Naive thymus-derived CD4-positive, alpha-beta T cell (primary cell): ENCODE measurements at regions of chr1 and their contacts with region 1.

Region 1: DNA sequence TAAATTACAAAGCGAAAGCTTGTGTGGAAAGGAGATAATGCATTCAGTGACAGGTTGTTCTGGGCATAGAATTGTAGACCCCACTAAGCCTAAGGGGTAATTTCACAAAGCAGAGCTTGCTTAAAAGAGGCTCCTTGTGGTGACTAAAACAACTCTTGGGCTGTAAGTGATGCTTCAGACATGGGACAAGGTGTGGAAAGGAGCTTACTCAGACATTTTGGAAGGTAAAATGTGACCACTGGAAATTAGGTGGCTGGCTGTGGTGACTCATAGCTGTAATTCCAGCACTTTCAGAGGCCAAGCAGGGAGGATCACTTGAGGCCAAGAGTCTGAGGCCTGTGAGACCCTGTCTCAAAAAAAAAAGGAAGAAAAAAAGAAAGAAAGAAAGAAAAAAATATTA is 51.1 kb upstream of the LRRC8C start:
- DNase-seq: no peak
- ATAC-seq: no peak
- H3K4me3 ChIP-seq: no peak overlapping the region
- H3K4me3 Mint-ChIP-seq: no peak overlapping the region
- H3K27ac ChIP-seq: no peak overlapping the region
- H3K27ac Mint-ChIP-seq: peak overlapping the region in 4 of 9 donors; percentile 5 to 61 (median 48)
- H3K4me1 ChIP-seq: no peaks in the 10 kb centered on the region
- H3K4me1 Mint-ChIP-seq: peaks cover 6 to 42% (median 27%) of the 10 kb centered on the region in 7 donors
- H3K27me3 ChIP-seq: no peaks in the 10 kb centered on the region
- H3K27me3 Mint-ChIP-seq: no peaks in the 10 kb centered on the region

Region 2: DNA sequence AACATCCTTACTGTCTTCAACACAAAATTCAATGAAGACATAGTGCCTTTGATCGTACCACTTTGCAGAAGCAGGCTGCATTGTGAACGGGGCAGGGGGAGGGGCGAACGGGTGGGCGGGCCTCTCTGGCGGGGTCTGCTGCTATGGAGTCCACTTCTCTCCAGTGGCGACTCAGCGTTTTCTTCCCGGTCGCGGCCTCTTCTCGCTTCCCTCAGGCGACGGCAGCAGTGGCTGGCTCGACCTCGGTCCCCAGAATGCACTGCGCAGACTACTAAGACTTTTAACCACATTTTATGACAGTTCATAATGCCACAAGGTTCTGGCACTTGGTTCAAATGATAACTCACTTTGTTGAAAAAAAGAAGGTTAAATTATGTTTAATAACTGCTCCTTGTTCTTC is 477.2 kb before region 1 on chr1:
- CTCF ChIA-PET with region 1: no interaction called
- POLR2A ChIA-PET with region 1: no interaction called
- intact Hi-C with region 1: no loop called
- DNase-seq: no peak
- ATAC-seq: no peak
- H3K4me3 ChIP-seq: no peak overlapping the region
- H3K4me3 Mint-ChIP-seq: no peak overlapping the region
- H3K27ac ChIP-seq: no peak overlapping the region
- H3K27ac Mint-ChIP-seq: peak overlapping the region in 4 of 9 donors; percentile 17 to 71 (median 36)
- H3K4me1 ChIP-seq: no peaks in the 10 kb centered on the region
- H3K4me1 Mint-ChIP-seq: peaks cover 0 to 14% (median 9%) of the 10 kb centered on the region in 7 donors
- H3K27me3 ChIP-seq: no peaks in the 10 kb centered on the region
- H3K27me3 Mint-ChIP-seq: no peaks in the 10 kb centered on the region

Region 3: GRCh38 chr1:89381618-89382017 is 200.2 kb before region 1 on chr1:
- CTCF ChIA-PET with region 1: no interaction called
- POLR2A ChIA-PET with region 1: no interaction called
- intact Hi-C with region 1: no loop called
- DNase-seq: no peak
- ATAC-seq: no peak
- H3K4me3 ChIP-seq: no peak overlapping the region
- H3K4me3 Mint-ChIP-seq: no peak overlapping the region
- H3K27ac ChIP-seq: no peak overlapping the region
- H3K27ac Mint-ChIP-seq: no peak overlapping the region
- H3K4me1 ChIP-seq: no peaks in the 10 kb centered on the region
- H3K4me1 Mint-ChIP-seq: peaks cover 0 to 14% (median 0%) of the 10 kb centered on the region in 7 donors
- H3K27me3 ChIP-seq: no peaks in the 10 kb centered on the region
- H3K27me3 Mint-ChIP-seq: peaks cover 0 to 2% (median 0%) of the 10 kb centered on the region in 5 donors

Region 4: DNA sequence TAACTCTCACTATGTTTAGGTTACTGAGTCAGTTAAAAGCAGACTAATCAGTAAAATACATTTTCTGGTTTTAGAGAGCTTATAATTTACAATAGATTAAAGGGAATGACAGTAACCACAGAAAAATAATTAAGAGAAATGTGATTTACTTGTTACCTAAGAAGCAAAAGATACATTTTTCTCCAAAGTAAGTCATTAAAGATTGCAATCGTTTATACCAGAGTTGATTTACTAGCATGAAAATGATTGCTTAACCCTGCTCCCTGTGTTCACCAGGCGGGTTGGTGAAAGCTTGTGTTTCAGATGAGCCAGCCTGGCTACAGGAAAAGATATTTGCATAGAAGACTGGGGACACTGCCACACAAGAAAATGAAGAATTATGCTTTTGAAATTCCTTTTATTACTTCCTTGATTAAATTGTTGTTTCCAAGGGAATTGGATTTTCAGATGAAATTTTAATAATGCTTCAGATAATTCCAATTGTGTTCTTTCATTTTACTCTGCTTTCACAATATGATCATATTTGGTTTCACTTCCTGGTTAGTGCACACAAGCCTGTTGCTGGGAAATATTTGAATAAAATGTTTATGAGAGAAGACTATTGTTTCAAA is 29.3 kb before region 1 on chr1:
- CTCF ChIA-PET with region 1: no interaction called
- POLR2A ChIA-PET with region 1: no interaction called
- intact Hi-C with region 1: no loop called
- DNase-seq: peak in 3 of 9 donors; percentile 4 to 13 (median 12)
- ATAC-seq: peak; percentile 54
- H3K4me3 ChIP-seq: peak overlapping the region; percentile 40
- H3K4me3 Mint-ChIP-seq: peak overlapping the region in 9 of 10 donors; percentile 18 to 78 (median 56)
- H3K27ac ChIP-seq: no peak overlapping the region
- H3K27ac Mint-ChIP-seq: peak overlapping the region; percentile 7 to 77 (median 62)
- H3K4me1 ChIP-seq: peaks cover 0 to 12% of the 10 kb centered on the region in 2 donors
- H3K4me1 Mint-ChIP-seq: peaks cover 44 to 95% (median 76%) of the 10 kb centered on the region in 7 donors
- H3K27me3 ChIP-seq: no peaks in the 10 kb centered on the region
- H3K27me3 Mint-ChIP-seq: no peaks in the 10 kb centered on the region

Region 5: GRCh38 chr1:89566761-89567174 is 15.1 kb before region 1 on chr1:
- CTCF ChIA-PET with region 1: no interaction called
- POLR2A ChIA-PET with region 1: interaction called, 3 read pairs
- intact Hi-C with region 1: loop called in 1 of 2 experiments (anchors 1 kb)
- DNase-seq: no peak
- ATAC-seq: peak; percentile 46
- H3K4me3 ChIP-seq: no peak overlapping the region
- H3K4me3 Mint-ChIP-seq: no peak overlapping the region
- H3K27ac ChIP-seq: no peak overlapping the region
- H3K27ac Mint-ChIP-seq: peak overlapping the region in 3 of 9 donors; percentile 11 to 54 (median 53)
- H3K4me1 ChIP-seq: peaks cover 0 to 4% of the 10 kb centered on the region in 2 donors
- H3K4me1 Mint-ChIP-seq: peaks cover 22 to 70% (median 59%) of the 10 kb centered on the region in 7 donors
- H3K27me3 ChIP-seq: no peaks in the 10 kb centered on the region
- H3K27me3 Mint-ChIP-seq: no peaks in the 10 kb centered on the region

Region 6: GRCh38 chr1:89615676-89616598 is 34.1 kb after region 1 on chr1:
- CTCF ChIA-PET with region 1: interaction called, 49 read pairs
- POLR2A ChIA-PET with region 1: interaction called, 488 read pairs
- intact Hi-C with region 1: no loop called
- DNase-seq: no peak
- ATAC-seq: peak; percentile 54
- H3K4me3 ChIP-seq: no peak overlapping the region
- H3K4me3 Mint-ChIP-seq: peak overlapping the region in 2 of 10 donors; percentile 23 to 24
- H3K27ac ChIP-seq: no peak overlapping the region
- H3K27ac Mint-ChIP-seq: peak overlapping the region in 8 of 9 donors; percentile 15 to 86 (median 74)
- H3K4me1 ChIP-seq: peaks cover 30 to 42% of the 10 kb centered on the region in 2 donors
- H3K4me1 Mint-ChIP-seq: peaks cover 38 to 95% (median 84%) of the 10 kb centered on the region in 7 donors
- H3K27me3 ChIP-seq: no peaks in the 10 kb centered on the region
- H3K27me3 Mint-ChIP-seq: no peaks in the 10 kb centered on the region

Region 7: GRCh38 chr1:89622895-89623294 is 41.0 kb after region 1 on chr1:
- CTCF ChIA-PET with region 1: interaction called, 11 read pairs
- POLR2A ChIA-PET with region 1: interaction called, 6 read pairs
- intact Hi-C with region 1: loop called in 1 of 2 experiments (anchors 1 kb)
- DNase-seq: peak in 5 of 9 donors; percentile 29 to 58 (median 39)
- ATAC-seq: peak; percentile 71
- H3K4me3 ChIP-seq: no peak overlapping the region
- H3K4me3 Mint-ChIP-seq: peak overlapping the region in 3 of 10 donors; percentile 16 to 54 (median 31)
- H3K27ac ChIP-seq: no peak overlapping the region
- H3K27ac Mint-ChIP-seq: peak overlapping the region in 8 of 9 donors; percentile 35 to 98 (median 78)
- H3K4me1 ChIP-seq: peaks cover 9 to 22% of the 10 kb centered on the region in 2 donors
- H3K4me1 Mint-ChIP-seq: peaks cover 15 to 78% (median 61%) of the 10 kb centered on the region in 7 donors
- H3K27me3 ChIP-seq: no peaks in the 10 kb centered on the region
- H3K27me3 Mint-ChIP-seq: no peaks in the 10 kb centered on the region

Region 8: DNA sequence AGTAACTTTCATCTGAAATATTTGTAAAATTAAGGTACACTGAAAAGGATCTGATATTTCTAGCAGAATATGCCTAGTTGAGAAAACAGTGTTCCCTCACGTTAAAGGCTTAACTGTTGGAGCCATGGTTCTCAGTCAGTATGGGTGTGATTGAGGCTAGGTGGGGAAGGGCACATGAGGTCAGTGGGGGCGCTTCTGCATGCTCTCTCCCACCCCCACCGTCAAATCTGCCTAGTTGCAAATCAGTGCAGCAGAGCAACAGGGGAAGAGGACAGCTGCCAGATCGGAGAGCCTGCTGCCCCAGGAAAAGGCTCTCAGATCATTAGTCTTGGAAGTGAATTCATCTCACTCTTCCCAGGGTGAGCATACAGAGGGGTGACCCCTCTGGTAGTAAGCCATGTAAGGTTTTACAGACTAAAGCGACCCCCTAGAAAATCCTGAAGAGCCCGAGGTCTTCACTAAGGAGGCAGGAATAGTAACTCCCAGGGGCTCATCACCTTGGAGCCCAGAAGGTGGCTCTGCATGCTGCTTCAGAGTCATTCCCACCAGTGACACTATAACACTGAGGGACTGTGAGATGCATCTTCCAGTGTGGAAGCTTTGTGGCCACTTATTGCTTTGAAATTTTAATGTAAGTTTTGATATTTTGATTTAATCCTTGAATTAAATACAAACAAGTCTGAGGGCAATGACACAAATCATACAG is 1218.3 kb after region 1 on chr1:
- CTCF ChIA-PET with region 1: no interaction called
- POLR2A ChIA-PET with region 1: no interaction called
- intact Hi-C with region 1: no loop called
- DNase-seq: no peak
- ATAC-seq: no peak
- H3K4me3 ChIP-seq: no peak overlapping the region
- H3K4me3 Mint-ChIP-seq: no peak overlapping the region
- H3K27ac ChIP-seq: no peak overlapping the region
- H3K27ac Mint-ChIP-seq: no peak overlapping the region
- H3K4me1 ChIP-seq: no peaks in the 10 kb centered on the region
- H3K4me1 Mint-ChIP-seq: no peaks in the 10 kb centered on the region
- H3K27me3 ChIP-seq: peaks cover 0 to 3% of the 10 kb centered on the region in 2 donors
- H3K27me3 Mint-ChIP-seq: peaks cover 27 to 49% (median 42%) of the 10 kb centered on the region in 5 donors